Common myeloid progenitor, CD34-positive (primary cell): ENCODE measurements at regions of chr5 and their contacts with region 1.

Region 1: DNA sequence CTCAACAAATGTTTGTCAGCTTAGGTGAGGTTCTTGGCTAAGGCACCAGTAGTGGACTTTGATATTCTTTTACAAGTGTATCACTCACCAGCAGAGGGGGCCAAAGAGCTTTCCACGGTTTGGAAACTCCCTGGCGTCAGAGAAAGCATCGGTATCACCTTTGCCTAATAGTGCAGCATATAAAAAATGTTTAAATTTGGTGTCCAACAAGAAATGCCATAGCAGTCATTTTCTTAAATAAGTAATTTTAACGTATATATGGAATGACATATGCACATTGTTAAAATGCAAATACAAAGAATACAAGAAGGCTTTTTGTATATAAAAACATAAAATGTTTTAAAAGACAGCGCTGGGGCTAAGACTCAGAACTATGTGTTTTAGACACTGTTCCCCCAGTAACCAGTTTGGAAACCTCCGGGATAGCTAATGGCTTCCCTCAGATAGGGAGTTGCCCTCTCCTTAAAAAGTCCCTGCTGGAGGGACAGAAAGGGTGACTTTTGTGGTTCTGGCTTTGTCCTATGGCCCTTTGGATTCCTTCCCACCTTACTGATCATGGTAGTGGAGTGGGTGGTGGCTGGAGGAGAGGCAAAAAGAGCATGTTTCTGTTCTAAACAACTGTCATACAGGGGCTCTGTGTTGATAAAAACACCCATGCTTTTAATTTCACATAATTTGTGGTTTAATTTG is 124.6 kb downstream of the GPBP1 start:
- DNase-seq: peak; percentile 86 to 93 (median 87)
- H3K4me3 ChIP-seq: peak overlapping the region in 4 of 7 experiments; percentile 41 to 57 (median 54)
- H3K27ac ChIP-seq: no peak overlapping the region
- H3K4me1 ChIP-seq: peaks cover 6 to 14% (median 8%) of the 10 kb centered on the region in 4 experiments
- H3K27me3 ChIP-seq: no peaks in the 10 kb centered on the region

Region 2: DNA sequence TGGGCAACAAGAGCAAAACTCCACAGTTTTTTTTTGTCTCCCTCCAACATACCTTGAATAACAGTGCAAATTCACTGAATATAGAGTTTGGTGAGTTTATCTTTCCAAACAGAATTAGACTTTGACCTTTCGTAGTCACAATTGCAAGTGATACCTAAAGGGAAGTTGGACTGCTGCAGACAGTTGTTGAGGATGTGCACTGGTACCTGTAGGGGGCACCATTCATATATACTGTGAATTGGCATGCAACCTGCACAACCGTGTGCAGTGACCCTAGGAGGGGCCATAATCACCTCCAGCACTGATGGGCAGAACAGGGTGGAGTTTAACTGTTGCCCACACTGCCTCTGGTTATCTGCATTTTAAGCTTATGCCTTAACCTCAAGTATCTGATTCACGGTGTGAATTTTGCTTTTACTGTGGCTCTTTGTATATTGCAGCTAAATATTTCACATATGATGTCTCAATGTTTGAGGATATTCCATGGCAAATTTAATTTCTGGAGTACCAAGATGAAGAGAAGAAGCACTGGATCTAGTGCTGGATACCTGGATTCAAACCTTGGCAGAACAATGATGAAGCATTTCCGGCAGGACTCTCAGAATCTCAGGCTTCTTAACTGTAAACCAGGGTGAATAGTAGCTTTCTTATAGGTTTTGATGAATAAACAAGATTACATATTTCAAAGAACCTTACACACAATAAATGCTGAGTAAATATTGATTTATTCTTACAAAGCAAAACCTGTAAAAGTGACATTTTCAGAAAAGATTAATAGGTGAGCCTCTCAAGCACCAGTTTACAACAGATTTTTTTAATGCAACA is 39.8 kb after region 1 on chr5:
- CTCF ChIA-PET with region 1: no interaction called
- POLR2A ChIA-PET with region 1: no interaction called
- DNase-seq: peak; percentile 20 to 47 (median 45)
- H3K4me3 ChIP-seq: no peak overlapping the region
- H3K27ac ChIP-seq: no peak overlapping the region
- H3K4me1 ChIP-seq: no peaks in the 10 kb centered on the region
- H3K27me3 ChIP-seq: no peaks in the 10 kb centered on the region

Region 3: GRCh38 chr5:57887851-57888621 is 589.6 kb after region 1 on chr5:
- CTCF ChIA-PET with region 1: interaction called, 12 read pairs
- POLR2A ChIA-PET with region 1: no interaction called
- DNase-seq: peak; percentile 52 to 69 (median 69)
- H3K4me3 ChIP-seq: no peak overlapping the region
- H3K27ac ChIP-seq: no peak overlapping the region
- H3K4me1 ChIP-seq: peaks cover 0 to 3% (median 0%) of the 10 kb centered on the region in 4 experiments
- H3K27me3 ChIP-seq: no peaks in the 10 kb centered on the region

Region 4: DNA sequence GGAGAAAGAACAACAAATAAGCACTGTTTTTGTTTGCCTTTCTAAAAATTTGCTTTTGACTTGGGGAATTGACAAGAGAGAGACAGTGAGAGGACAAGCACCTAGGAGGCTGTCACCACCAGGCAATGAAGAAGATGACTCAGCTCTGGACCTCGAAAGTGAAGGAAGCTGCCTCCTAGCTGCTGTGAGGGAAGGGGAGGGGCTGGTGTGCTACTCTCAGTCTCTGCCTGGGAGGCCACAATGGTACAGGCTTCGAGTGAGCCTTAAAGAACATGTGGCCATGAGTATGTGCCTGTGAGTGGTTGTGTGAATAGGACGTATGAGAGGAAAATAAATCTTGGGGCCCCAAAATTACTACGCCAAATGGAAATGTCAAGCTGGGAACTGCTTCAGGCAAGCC is 1168.5 kb after region 1 on chr5:
- CTCF ChIA-PET with region 1: interaction called, 52 read pairs
- POLR2A ChIA-PET with region 1: no interaction called
- DNase-seq: peak; percentile 37 to 85 (median 75)
- H3K4me3 ChIP-seq: no peak overlapping the region
- H3K27ac ChIP-seq: no peak overlapping the region
- H3K4me1 ChIP-seq: peaks cover 0 to 12% (median 5%) of the 10 kb centered on the region in 4 experiments
- H3K27me3 ChIP-seq: no peaks in the 10 kb centered on the region